AG04450 (cell line): ENCODE measurements at regions of chr9 and their contacts with region 1.

Region 1: GRCh38 chr9:38068866-38069629 is at the start of gene SHB:
- DNase-seq: no peak
- H3K4me3 ChIP-seq: peak within 1 kb of the TSS; percentile 93
- H3K27ac ChIP-seq: peak within 1 kb of the TSS; percentile 11
- H3K27me3 ChIP-seq: no peaks in the 10 kb centered on the region
- CTCF ChIP-seq: no peak; the same call in 1 of the 2 replicates
- polyA plus RNA-seq, gene SHB: 16.7 and 20.3 TPM in 2 replicates

Region 2: DNA sequence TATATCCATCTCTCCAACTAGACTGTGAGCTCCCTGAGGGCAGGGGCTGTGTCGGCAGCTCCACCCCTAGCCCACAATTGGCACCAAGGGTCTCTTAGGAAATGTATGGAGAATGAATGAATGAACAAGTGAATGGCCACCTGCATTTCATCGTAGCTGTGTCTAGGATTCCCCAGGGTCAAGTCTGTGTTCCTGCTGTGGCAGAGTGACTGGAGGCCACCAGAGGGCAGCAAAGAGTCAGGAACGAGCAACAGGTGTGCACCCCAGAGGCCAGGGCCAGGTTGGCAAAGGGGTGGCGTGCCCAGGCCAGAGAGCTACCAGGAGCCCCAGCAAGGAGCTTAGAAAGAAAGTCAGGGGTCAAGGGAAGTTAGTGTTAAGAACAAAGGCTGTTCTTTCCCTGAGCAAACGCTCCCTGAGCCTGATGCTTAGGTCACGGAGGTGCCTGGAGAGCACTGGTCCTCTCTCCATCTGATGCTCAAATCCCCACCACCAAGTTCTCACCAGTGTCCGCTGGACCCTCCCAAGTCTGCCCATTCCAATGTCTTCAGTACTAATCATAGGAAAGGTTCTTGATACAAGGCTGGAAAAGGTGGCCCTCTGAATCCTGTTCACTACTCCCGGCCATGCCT is 1195.7 kb before region 1 on chr9:
- CTCF ChIA-PET with region 1: no interaction called
- POLR2A ChIA-PET with region 1: no interaction called
- DNase-seq: no peak
- H3K4me3 ChIP-seq: no peak overlapping the region
- H3K27ac ChIP-seq: no peak overlapping the region
- H3K27me3 ChIP-seq: peaks cover 21% of the 10 kb centered on the region
- CTCF ChIP-seq: peak; percentile 88

Region 3: DNA sequence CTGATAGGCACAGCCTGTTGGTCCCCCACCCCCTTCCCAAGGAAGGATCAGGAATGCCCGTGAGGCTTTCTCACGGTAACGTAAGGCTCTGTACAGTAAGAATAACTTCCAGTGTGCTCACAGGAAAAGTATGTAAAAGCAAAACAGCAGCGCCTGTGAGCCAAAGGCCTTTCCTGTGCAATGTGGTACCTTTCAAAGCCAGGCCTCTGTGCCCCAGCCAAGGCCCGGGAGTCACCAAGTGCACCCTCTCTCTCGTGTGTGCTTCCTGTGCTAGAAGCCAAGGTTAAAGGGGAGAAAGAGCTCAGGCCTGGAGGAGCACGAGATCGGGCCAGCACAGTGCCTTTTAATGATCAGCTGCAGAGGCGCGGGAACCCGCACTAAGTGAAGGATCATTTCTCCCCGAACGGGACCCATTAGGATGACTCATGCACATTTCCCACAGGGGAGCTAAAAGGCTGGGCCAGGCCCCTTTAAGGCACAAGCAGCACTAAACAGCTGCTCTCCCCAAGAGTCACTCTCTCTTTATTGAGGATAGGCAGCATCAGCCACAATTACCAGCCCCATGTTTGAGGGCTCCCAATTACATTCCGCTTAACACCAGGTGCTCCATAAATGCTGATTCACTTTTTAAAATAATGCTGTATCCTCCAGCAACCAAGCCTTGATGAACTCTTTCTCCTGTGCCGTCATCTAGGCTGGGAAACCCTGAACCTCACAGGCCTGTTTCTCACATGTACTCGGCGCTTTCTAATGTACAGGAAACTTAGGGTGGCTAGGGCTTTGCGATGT is 42.8 kb before region 1 on chr9:
- CTCF ChIA-PET with region 1: interaction called, 3 read pairs
- POLR2A ChIA-PET with region 1: interaction called, 10 read pairs
- DNase-seq: peak; percentile 91
- H3K4me3 ChIP-seq: peak overlapping the region; percentile 11
- H3K27ac ChIP-seq: peak overlapping the region; percentile 100
- H3K27me3 ChIP-seq: no peaks in the 10 kb centered on the region
- CTCF ChIP-seq: no peak